Activated naive CD4-positive, alpha-beta T cell treated with anti-CD3 and anti-CD28 coated beads for 36 hours (primary cell): ENCODE measurements at regions of chr2 and their contacts with region 1.

Region 1: GRCh38 chr2:102301867-102302362 is 9.4 kb upstream of the IL1RL1 start:
- DNase-seq: peak; percentile 76
- H3K4me3 Mint-ChIP-seq: no peak overlapping the region
- H3K27ac Mint-ChIP-seq: no peak overlapping the region
- H3K4me1 Mint-ChIP-seq: peaks cover 35% of the 10 kb centered on the region
- H3K27me3 Mint-ChIP-seq: no peaks in the 10 kb centered on the region

Region 2: GRCh38 chr2:102355526-102356380 is 53.8 kb after region 1 on chr2 and contains the start of gene IL18R1:
- CTCF ChIA-PET with region 1: interaction called, 6 read pairs
- intact Hi-C with region 1: loop called (anchors 1 kb)
- DNase-seq: peak; percentile 74
- H3K4me3 Mint-ChIP-seq: peak within 1 kb of the TSS; percentile 99
- H3K27ac Mint-ChIP-seq: peak within 1 kb of the TSS; percentile 96
- H3K4me1 Mint-ChIP-seq: peaks cover 45% of the 10 kb centered on the region
- H3K27me3 Mint-ChIP-seq: no peaks in the 10 kb centered on the region
- total RNA-seq, gene IL18R1: 17.1 to 18.4 TPM

Region 3: GRCh38 chr2:102449370-102449974 is 147.6 kb after region 1 on chr2:
- CTCF ChIA-PET with region 1: interaction called, 19 read pairs
- intact Hi-C with region 1: no loop called
- DNase-seq: peak; percentile 86
- H3K4me3 Mint-ChIP-seq: no peak overlapping the region
- H3K27ac Mint-ChIP-seq: no peak overlapping the region
- H3K4me1 Mint-ChIP-seq: peaks cover 2% of the 10 kb centered on the region
- H3K27me3 Mint-ChIP-seq: no peaks in the 10 kb centered on the region